Heart right ventricle (tissue), 16 donors: ENCODE measurements at regions of chr19 and their contacts with region 1.

Region 1: DNA sequence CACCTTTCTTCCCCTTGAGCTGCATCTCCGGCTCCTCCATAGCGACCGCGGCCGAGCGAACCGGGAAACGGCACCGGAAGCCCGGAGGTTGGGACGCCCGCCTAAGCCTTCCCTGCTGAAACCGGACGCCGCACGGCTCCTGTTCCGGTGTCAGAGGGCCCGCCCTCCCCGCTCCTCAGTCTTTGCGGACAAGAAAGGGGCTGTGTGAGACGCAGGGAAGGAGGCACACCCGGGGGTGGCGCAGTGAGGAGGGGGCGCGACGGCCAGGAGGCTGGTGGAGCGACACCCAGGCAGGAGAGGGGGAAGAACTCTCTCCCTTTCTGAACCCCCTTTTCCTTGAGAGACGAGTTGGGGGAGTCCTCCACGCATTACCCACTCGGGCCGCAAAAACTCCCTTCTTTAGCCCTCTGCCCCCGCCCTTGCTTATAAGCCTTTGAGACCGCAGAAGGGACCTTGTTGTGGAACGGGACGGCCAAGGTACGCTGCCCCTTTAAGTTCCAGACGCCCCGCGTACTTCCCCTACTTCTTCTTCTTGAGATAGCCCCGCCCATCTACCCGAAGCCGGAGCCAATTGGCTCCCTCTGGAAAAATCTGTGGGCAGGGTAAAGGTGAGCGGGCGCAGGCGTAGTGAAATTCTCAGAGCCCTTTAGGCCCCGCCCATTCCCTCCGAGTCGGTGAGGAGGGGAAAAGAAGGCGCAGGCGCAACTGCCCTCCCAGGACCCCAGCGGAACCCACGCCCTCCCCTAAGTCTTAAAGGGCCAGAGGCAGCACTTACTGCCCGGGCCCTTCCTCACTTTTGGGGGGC is at the starts of genes BORCS8 and RFXANK:
- DNase-seq: peak; percentile 97 to 100
- ATAC-seq: peak; percentile 95 to 98 (median 97)
- H3K4me3 ChIP-seq: peak within 1 kb of the TSS; percentile 76 to 99 (median 91)
- H3K27ac ChIP-seq: peak within 1 kb of the TSS; percentile 96 to 100 (median 100)
- H3K4me1 ChIP-seq: peaks cover 9 to 61% (median 46%) of the 10 kb centered on the region in 9 donors
- H3K27me3 ChIP-seq: no peaks in the 10 kb centered on the region
- CTCF ChIP-seq: no peak
- total RNA-seq, gene BORCS8: 21.1 to 33.2 (median 25.0) TPM
- total RNA-seq, gene RFXANK: 30.6 to 42.6 (median 35.8) TPM

Region 2: GRCh38 chr19:19033426-19034203 is 158.7 kb before region 1 on chr19 and contains the starts of genes ARMC6 and SUGP2:
- intact Hi-C with region 1: no loop called
- DNase-seq: peak; percentile 83 to 87
- ATAC-seq: peak; percentile 83 to 94 (median 89)
- H3K4me3 ChIP-seq: peak within 1 kb of the TSS; percentile 71 to 99 (median 86)
- H3K27ac ChIP-seq: peak within 1 kb of the TSS; percentile 91 to 100 (median 98)
- H3K4me1 ChIP-seq: peaks cover 0 to 38% (median 29%) of the 10 kb centered on the region in 9 donors
- H3K27me3 ChIP-seq: no peaks in the 10 kb centered on the region
- CTCF ChIP-seq: peak in 4 of 9 donors; percentile 9 to 23 (median 15)
- total RNA-seq, gene ARMC6: 13.4 to 22.3 (median 15.2) TPM
- total RNA-seq, gene SUGP2: 50.4 to 72.3 (median 63.3) TPM

Region 3: DNA sequence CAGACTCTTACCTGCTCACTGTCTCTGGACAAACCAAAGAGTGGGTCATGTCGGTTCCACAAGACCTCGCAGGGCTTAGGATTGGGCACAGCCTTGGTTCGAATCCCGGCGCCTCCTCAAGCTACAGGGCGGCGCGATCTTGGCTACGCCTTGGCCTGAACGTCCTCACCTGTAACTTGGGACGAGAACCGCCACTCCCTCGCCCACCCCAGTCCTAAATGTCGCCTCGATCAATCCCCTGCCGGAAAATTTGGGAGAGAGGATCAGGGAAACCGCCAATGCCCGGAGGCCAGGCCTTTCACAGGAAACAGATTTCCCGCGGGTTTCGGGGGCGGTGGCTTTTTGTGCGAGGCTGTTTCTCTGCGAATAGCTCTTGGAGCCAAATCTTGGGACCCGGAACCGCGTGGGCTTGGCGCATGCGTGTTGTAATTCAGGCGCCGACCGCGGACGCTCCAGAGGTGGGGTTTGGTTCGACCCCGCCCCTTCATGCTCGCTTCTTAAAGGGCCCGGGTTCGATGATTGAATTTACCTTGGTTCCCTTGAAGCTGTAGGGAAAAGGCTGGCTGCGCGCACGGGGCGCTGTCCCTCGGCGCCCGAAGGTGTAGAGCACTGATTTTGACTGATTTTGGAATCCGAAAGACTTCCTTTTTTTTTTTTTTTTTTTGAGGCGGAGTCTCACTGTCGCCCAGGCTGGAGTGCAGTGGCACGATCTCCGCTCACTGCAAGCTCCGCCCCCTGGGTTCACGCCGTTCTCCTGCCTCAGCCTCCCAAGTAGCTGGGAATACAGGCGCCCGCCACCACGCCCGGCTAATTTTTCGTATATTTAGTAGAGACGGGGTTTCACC is 11.0 kb after region 1 on chr19 and contains the start of gene NR2C2AP:
- intact Hi-C with region 1: loop called in 1 of 10 experiments (anchors 1 kb)
- DNase-seq: peak; percentile 93
- ATAC-seq: peak; percentile 85 to 98 (median 96)
- H3K4me3 ChIP-seq: peak within 1 kb of the TSS; percentile 43 to 75 (median 62)
- H3K27ac ChIP-seq: peak within 1 kb of the TSS in 9 of 10 donors; percentile 61 to 87 (median 80)
- H3K4me1 ChIP-seq: peaks cover 4 to 15% (median 10%) of the 10 kb centered on the region in 9 donors
- H3K27me3 ChIP-seq: peaks cover 0 to 12% (median 9%) of the 10 kb centered on the region in 7 donors
- CTCF ChIP-seq: no peak
- total RNA-seq, gene NR2C2AP: 3.2 to 8.5 (median 5.1) TPM

Region 4: GRCh38 chr19:19320362-19321142 is 128.3 kb after region 1 on chr19 and contains the starts of genes MAU2 and SUGP1:
- intact Hi-C with region 1: loop called in 3 of 10 experiments (anchors 5 to 10 kb)
- DNase-seq: peak; percentile 88 to 89
- ATAC-seq: peak; percentile 93 to 98 (median 96)
- H3K4me3 ChIP-seq: peak within 1 kb of the TSS; percentile 75 to 100 (median 98)
- H3K27ac ChIP-seq: peak within 1 kb of the TSS; percentile 82 to 98 (median 92)
- H3K4me1 ChIP-seq: peaks cover 12 to 63% (median 47%) of the 10 kb centered on the region in 9 donors
- H3K27me3 ChIP-seq: no peaks in the 10 kb centered on the region
- CTCF ChIP-seq: peak in 8 of 9 donors; percentile 11 to 68 (median 50)
- total RNA-seq, gene MAU2: 29.3 to 48.6 (median 36.7) TPM
- total RNA-seq, gene SUGP1: 33.6 to 50.2 (median 44.8) TPM

Region 5: GRCh38 chr19:19488875-19489690 is 296.8 kb after region 1 on chr19:
- intact Hi-C with region 1: loop called in 1 of 10 experiments (anchors 10 kb)
- DNase-seq: peak; percentile 61 to 87
- ATAC-seq: peak; percentile 42 to 84 (median 73)
- H3K4me3 ChIP-seq: peak overlapping the region in 7 of 10 donors; percentile 18 to 47 (median 26)
- H3K27ac ChIP-seq: peak overlapping the region; percentile 36 to 91 (median 80)
- H3K4me1 ChIP-seq: peaks cover 22 to 66% (median 49%) of the 10 kb centered on the region in 9 donors
- H3K27me3 ChIP-seq: no peaks in the 10 kb centered on the region
- CTCF ChIP-seq: no peak